ENCODE measurements at regions of chr17 and their contacts with region 1.

Region 1: GRCh38 chr17:28925912-28926365 is 23.1 kb upstream of the DHRS13 start:
- DNase-seq: peak; percentile 47
- ATAC-seq: peak; percentile 75
- H3K4me3 ChIP-seq: no peak overlapping the region
- H3K27ac ChIP-seq: no peak overlapping the region
- H3K4me1 ChIP-seq: peaks cover 12% of the 10 kb centered on the region
- H3K27me3 ChIP-seq: no peaks in the 10 kb centered on the region
- CTCF ChIP-seq: no peak
- EP300 ChIP-seq: no peak
- POLR2A ChIP-seq: no peak
- RAD21 ChIP-seq: no peak

Region 2: GRCh38 chr17:28937044-28937729 is 11.2 kb after region 1 on chr17:
- CTCF ChIA-PET with region 1: interaction called, 6 read pairs
- POLR2A ChIA-PET with region 1: interaction called, 3 read pairs
- RAD21 ChIA-PET with region 1: interaction called, 3 read pairs
- SMC1A ChIA-PET with region 1: interaction called, 34 read pairs
- in situ Hi-C with region 1: no loop called
- intact Hi-C with region 1: no loop called
- DNase-seq: no peak
- ATAC-seq: no peak
- H3K4me3 ChIP-seq: no peak overlapping the region
- H3K27ac ChIP-seq: no peak overlapping the region
- H3K4me1 ChIP-seq: peaks cover 11% of the 10 kb centered on the region; the same call in 1 of the 2 replicates
- H3K27me3 ChIP-seq: no peaks in the 10 kb centered on the region
- CTCF ChIP-seq: no peak
- EP300 ChIP-seq: no peak
- POLR2A ChIP-seq: no peak
- RAD21 ChIP-seq: no peak

Region 3: GRCh38 chr17:28946239-28946638 is 20.3 kb after region 1 on chr17:
- CTCF ChIA-PET with region 1: interaction called, 6 read pairs
- POLR2A ChIA-PET with region 1: interaction called, 7 read pairs
- RAD21 ChIA-PET with region 1: interaction called, 6 read pairs
- SMC1A ChIA-PET with region 1: interaction called, 34 read pairs
- in situ Hi-C with region 1: no loop called
- intact Hi-C with region 1: no loop called
- DNase-seq: no peak
- ATAC-seq: no peak
- H3K4me3 ChIP-seq: 0 out of 2 replicates have a peak overlapping the region, but pooled peaks have one; percentile 53
- H3K27ac ChIP-seq: peak overlapping the region; percentile 15; the same call in 1 of the 2 replicates
- H3K4me1 ChIP-seq: peaks cover 13% of the 10 kb centered on the region
- H3K27me3 ChIP-seq: no peaks in the 10 kb centered on the region
- CTCF ChIP-seq: no peak
- EP300 ChIP-seq: no peak
- POLR2A ChIP-seq: no peak
- RAD21 ChIP-seq: no peak